ENCODE measurements at regions of chr3 and their contacts with region 1.

Region 1: DNA sequence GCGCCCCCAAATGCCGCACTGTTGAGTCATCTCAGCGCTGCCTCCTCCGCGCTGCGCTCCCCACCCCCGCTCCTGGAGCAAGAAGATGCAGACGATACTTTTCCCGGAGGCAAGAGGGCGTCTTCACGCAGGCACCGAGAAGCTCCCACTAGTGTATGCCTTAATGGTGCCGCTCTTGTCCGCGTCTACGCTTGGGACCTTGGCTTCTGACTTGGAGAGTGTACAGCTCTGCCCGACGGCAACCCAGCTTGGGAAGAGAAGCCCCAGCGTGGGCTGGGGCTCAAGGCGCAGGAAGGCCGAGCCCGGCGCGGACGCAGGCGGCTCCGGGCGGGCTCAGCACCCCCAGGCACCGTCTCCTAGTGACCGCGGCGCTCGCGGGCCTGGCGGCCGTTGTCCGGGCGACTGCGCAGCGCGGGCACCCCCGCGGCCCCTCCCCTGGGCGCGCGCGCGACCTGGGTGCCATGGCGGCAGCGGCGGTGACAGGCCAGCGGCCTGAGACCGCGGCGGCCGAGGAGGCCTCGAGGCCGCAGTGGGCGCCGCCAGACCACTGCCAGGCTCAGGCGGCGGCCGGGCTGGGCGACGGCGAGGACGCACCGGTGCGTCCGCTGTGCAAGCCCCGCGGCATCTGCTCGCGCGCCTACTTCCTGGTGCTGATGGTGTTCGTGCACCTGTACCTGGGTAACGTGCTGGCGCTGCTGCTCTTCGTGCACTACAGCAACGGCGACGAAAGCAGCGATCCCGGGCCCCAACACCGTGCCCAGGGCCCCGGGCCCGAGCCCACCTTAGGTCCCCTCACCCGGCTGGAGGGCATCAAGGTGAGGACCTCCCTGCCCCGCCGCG is at the start of gene P4HTM:
- DNase-seq: peak; percentile 64 to 82
- H3K4me3 ChIP-seq: peak within 1 kb of the TSS; percentile 78
- H3K27ac ChIP-seq: peak within 1 kb of the TSS; percentile 48; the same call in 1 of the 2 replicates
- H3K4me1 ChIP-seq: peaks cover 18% of the 10 kb centered on the region
- H3K27me3 ChIP-seq: no peaks in the 10 kb centered on the region
- CTCF ChIP-seq: no peak; the same call in 1 of the 2 replicates
- total RNA-seq, gene P4HTM: 49.1 and 57.1 TPM in 2 replicates

Region 2: DNA sequence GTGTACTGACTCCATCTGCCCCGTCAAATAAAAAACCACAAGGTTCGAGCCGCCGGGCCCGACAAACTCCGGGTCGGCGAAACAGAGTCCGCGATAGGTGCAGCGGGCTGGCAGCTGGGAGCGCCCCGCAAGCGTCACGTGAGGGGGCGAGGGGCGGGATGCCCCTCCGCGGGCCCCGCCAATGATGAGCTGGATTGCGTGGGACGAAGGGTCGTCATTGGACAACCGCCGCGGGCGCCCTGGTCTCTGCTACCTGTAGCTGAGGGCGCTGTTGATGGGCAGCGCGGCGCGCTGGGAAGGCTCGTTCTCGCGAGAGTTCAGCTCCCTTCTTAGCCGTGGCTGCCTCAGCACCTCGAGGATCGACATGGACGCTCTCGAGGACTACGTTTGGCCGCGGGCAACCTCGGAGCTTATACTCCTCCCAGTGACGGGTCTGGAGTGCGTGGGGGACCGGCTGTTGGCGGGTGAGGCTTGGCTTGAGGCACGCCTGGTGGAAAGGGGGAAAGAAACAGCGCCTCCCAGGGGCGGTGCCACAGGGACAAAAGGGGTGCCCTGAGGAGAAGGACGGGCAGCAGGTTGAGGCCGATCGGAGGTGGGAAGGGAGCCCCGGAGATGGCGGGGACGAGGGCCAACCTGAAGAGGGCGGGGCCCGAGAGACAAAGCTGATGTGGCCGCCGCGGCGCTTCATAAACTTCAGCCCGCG is 17.2 kb after region 1 on chr3 and contains the start of gene WDR6:
- CTCF ChIA-PET with region 1: interaction called, 18 read pairs
- POLR2A ChIA-PET with region 1: interaction called, 12 read pairs
- intact Hi-C with region 1: no loop called
- DNase-seq: peak; percentile 90 to 97
- H3K4me3 ChIP-seq: peak within 1 kb of the TSS; percentile 81
- H3K27ac ChIP-seq: peak within 1 kb of the TSS; percentile 87
- H3K4me1 ChIP-seq: peaks cover 9% of the 10 kb centered on the region; the same call in 1 of the 2 replicates
- H3K27me3 ChIP-seq: no peaks in the 10 kb centered on the region
- CTCF ChIP-seq: peak; percentile 60
- total RNA-seq, gene WDR6: 157 and 159 TPM in 2 replicates

Region 3: GRCh38 chr3:49013755-49014628 is 24.0 kb after region 1 on chr3:
- CTCF ChIA-PET with region 1: interaction called, 18 read pairs
- POLR2A ChIA-PET with region 1: interaction called, 8 read pairs
- intact Hi-C with region 1: loop called (anchors 2 kb)
- DNase-seq: peak in 1 of 2 experiments; percentile 50
- H3K4me3 ChIP-seq: no peak overlapping the region
- H3K27ac ChIP-seq: no peak overlapping the region
- H3K4me1 ChIP-seq: peaks cover 8% of the 10 kb centered on the region
- H3K27me3 ChIP-seq: no peaks in the 10 kb centered on the region
- CTCF ChIP-seq: peak; percentile 66

Region 4: DNA sequence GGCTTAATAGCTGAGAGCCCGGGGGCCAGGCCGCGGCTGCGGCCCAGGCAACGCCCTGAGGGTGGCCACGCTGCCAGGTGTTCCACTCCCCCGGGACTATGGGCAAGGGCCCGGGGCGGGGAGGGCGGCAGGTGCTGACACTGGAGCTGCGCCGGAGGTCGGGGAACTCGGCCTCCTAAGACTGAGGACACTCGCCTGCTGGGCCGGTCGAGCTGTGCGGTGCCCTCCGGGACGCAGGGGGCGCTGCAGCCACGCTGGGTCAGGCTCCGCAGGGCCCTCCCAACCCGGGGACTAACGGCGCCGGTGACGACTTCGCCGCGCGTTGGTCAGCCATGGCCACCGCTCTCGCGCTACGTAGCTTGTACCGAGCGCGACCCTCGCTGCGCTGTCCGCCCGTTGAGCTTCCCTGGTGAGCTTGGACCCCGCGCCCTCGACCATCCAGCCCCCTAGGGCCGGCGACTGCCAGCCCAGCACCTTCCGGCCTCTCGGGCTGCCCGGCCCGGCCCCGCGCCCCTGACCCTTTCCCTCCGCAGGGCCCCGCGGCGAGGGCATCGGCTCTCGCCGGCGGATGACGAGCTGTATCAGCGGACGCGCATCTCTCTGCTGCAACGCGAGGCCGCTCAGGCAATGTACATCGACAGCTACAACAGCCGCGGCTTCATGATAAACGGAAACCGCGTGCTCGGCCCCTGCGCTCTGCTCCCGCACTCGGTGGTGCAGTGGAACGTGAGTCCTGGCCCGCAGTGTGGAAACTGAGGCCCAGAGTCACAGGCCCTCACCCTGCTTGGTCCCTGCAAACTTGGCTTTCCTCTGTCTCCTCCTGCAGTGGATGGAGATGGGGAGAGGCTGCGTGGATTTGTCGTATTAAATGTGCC is 32.0 kb after region 1 on chr3 and contains the start of gene NDUFAF3:
- CTCF ChIA-PET with region 1: interaction called, 15 read pairs
- POLR2A ChIA-PET with region 1: no interaction called
- intact Hi-C with region 1: no loop called
- DNase-seq: peak; percentile 87 to 97
- H3K4me3 ChIP-seq: peak within 1 kb of the TSS; percentile 70
- H3K27ac ChIP-seq: peak within 1 kb of the TSS; percentile 87
- H3K4me1 ChIP-seq: peaks cover 29% of the 10 kb centered on the region
- H3K27me3 ChIP-seq: no peaks in the 10 kb centered on the region
- CTCF ChIP-seq: peak; percentile 90
- total RNA-seq, gene NDUFAF3: 32.9 and 38.8 TPM in 2 replicates